ENCODE measurements at regions of chr10 and their contacts with region 1.

Region 1: DNA sequence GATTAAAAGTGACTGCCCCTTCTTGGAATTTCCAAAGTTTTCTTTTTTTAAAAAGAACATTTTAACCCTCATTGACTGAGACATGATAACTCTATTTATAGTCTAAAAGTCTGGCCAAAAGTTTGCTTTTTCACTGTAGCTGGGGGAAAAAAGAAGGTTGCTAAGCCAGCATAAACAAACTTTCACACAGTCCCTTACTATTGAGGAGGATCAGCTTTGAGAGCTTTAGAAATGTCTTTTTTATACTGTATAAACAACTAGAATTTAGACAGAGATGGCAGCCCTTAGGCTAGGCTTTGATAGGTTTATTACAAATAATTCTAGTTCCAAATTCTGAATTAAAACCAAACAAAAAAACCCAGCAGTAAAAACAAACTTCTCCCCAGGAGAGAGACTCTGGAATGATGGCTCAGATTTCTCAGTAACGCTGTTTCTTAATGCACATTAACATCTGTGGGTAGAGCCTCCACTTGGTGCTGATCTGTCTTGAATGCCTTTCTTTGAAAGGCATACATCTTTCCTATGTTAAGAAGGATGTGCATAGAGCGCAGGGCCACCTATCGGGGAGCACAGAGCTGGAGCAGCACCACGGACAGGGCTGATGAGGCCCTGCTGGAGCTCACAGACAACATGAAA is 100.9 kb upstream of the PDLIM1 start:
- DNase-seq: peak; percentile 46
- ATAC-seq: peak; percentile 96
- H3K4me3 ChIP-seq: no peak overlapping the region
- H3K27ac ChIP-seq: no peak overlapping the region
- H3K4me1 ChIP-seq: no peaks in the 10 kb centered on the region
- H3K27me3 ChIP-seq: no peaks in the 10 kb centered on the region
- CTCF ChIP-seq: no peak
- POLR2A ChIP-seq: no peak
- RAD21 ChIP-seq: no peak

Region 2: GRCh38 chr10:95353123-95353522 is 38.6 kb before region 1 on chr10:
- CTCF ChIA-PET with region 1: no interaction called
- POLR2A ChIA-PET with region 1: interaction called, 10 read pairs
- dilution Hi-C with region 1: no loop called
- in situ Hi-C with region 1: no loop called
- intact Hi-C with region 1: no loop called
- DNase-seq: no peak
- ATAC-seq: no peak
- H3K4me3 ChIP-seq: no peak overlapping the region
- H3K27ac ChIP-seq: no peak overlapping the region
- H3K4me1 ChIP-seq: peaks cover 6% of the 10 kb centered on the region
- H3K27me3 ChIP-seq: no peaks in the 10 kb centered on the region
- CTCF ChIP-seq: no peak
- POLR2A ChIP-seq: no peak
- RAD21 ChIP-seq: no peak